Ovary (tissue), 10 donors: ENCODE measurements at regions of chr10 and their contacts with region 1.

Region 1: DNA sequence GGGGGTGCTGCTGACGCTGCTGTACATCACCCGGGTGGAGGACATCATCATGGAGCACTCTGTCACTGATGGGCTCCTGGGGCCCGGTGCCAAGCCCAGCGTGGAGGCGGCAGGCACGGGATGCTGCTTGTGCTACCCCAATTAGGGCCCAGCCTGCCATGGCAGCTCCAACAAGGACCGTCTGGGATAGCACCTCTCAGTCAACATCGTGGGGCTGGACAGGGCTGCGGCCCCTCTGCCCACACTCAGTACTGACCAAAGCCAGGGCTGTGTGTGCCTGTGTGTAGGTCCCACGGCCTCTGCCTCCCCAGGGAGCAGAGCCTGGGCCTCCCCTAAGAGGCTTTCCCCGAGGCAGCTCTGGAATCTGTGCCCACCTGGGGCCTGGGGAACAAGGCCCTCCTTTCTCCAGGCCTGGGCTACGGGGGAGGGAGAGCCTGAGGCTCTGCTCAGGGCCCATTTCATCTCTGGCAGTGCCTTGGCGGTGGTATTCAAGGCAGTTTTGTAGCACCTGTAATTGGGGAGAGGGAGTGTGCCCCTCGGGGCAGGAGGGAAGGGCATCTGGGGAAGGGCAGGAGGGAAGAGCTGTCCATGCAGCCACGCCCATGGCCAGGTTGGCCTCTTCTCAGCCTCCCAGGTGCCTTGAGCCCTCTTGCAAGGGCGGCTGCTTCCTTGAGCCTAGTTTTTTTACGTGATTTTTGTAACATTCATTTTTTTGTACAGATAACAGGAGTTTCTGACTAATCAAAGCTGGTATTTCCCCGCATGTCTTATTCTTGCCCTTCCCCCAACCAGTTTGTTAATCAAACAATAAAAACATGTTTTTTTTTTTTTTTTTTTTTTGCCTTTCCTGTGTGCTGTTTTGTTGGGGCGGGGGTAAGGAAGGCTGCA is 55.8 kb downstream of the TSPAN15 start:
- DNase-seq: no peak
- H3K4me3 ChIP-seq: no peak overlapping the region
- H3K27ac ChIP-seq: no peak overlapping the region
- H3K4me1 ChIP-seq: no peaks in the 10 kb centered on the region
- H3K27me3 ChIP-seq: no peaks in the 10 kb centered on the region
- CTCF ChIP-seq: no peak
- EP300 ChIP-seq: no peak
- POLR2A ChIP-seq: no peak

Region 2: GRCh38 chr10:69425511-69426298 is 81.4 kb before region 1 on chr10:
- intact Hi-C with region 1: loop called in 1 of 4 experiments (anchors 5 kb)
- DNase-seq: no peak
- H3K4me3 ChIP-seq: no peak overlapping the region
- H3K27ac ChIP-seq: no peak overlapping the region
- H3K4me1 ChIP-seq: no peaks in the 10 kb centered on the region
- H3K27me3 ChIP-seq: no peaks in the 10 kb centered on the region
- CTCF ChIP-seq: no peak
- EP300 ChIP-seq: no peak
- POLR2A ChIP-seq: no peak

Region 3: GRCh38 chr10:69439813-69440506 is 67.1 kb before region 1 on chr10:
- intact Hi-C with region 1: loop called in 1 of 4 experiments (anchors 5 kb)
- DNase-seq: no peak
- H3K4me3 ChIP-seq: no peak overlapping the region
- H3K27ac ChIP-seq: no peak overlapping the region
- H3K4me1 ChIP-seq: no peaks in the 10 kb centered on the region
- H3K27me3 ChIP-seq: no peaks in the 10 kb centered on the region
- CTCF ChIP-seq: no peak
- EP300 ChIP-seq: no peak
- POLR2A ChIP-seq: no peak

Region 4: GRCh38 chr10:69644658-69645295 is 137.7 kb after region 1 on chr10:
- intact Hi-C with region 1: no loop called
- DNase-seq: peak; percentile 23 to 75 (median 40)
- H3K4me3 ChIP-seq: no peak overlapping the region
- H3K27ac ChIP-seq: no peak overlapping the region
- H3K4me1 ChIP-seq: peaks cover 3% of the 10 kb centered on the region
- H3K27me3 ChIP-seq: no peaks in the 10 kb centered on the region
- CTCF ChIP-seq: peak in 2 of 3 donors; percentile 30 to 57
- EP300 ChIP-seq: no peak
- POLR2A ChIP-seq: no peak